CD4-positive, alpha-beta memory T cell (primary cell): ENCODE measurements at regions of chr6 and their contacts with region 1.

Region 1: DNA sequence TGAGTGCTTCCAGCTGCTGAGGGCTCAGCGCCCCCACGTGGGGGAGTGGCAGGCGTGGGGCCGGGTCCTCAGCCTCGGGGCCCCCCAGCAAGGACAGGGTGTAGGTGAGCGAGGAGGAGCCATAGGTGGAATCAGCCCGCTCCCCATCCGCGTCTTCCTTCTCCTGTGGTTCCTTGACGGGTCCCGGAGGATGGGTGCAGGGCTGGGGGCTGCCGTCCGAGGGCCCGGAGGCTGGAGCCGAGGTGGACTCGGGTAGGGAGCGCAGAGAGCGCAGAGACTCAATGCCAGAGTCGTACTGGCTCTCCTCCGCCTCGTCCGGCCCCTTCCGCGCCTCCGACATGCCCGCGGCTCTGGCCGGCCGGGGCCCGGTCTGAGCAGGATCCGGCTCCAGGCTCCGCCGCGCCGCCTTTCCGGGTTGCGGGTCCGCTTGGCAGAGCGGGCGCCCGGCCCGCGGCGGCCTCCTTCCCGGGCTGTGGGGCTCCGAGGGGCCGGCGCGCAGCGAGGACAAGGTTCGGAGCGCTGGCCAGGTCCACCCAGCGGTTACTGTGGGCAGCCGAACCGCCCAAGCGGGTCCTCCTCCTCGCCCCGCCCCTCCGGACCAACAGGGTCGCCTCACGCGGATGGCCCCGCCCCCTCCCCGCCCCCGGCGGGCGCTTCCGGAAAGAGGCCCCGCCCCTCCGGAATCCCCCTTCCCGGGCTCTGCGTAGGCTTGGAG is at the start of gene NFKBIE:
- DNase-seq: peak; percentile 93 to 96 (median 94)
- H3K4me3 ChIP-seq: peak within 1 kb of the TSS; percentile 83 to 89
- H3K4me3 Mint-ChIP-seq: peak within 1 kb of the TSS; percentile 73 to 96 (median 93)
- H3K27ac ChIP-seq: peak within 1 kb of the TSS; percentile 96
- H3K27ac Mint-ChIP-seq: peak within 1 kb of the TSS; percentile 95 to 98 (median 97)
- H3K4me1 ChIP-seq: peaks cover 38% of the 10 kb centered on the region
- H3K4me1 Mint-ChIP-seq: peaks cover 17 to 48% (median 40%) of the 10 kb centered on the region in 4 donors
- H3K27me3 ChIP-seq: peaks cover 12% of the 10 kb centered on the region
- H3K27me3 Mint-ChIP-seq: peaks cover 8 to 18% of the 10 kb centered on the region in 2 donors
- total RNA-seq, gene NFKBIE: 12.7 to 15.0 TPM

Region 2: DNA sequence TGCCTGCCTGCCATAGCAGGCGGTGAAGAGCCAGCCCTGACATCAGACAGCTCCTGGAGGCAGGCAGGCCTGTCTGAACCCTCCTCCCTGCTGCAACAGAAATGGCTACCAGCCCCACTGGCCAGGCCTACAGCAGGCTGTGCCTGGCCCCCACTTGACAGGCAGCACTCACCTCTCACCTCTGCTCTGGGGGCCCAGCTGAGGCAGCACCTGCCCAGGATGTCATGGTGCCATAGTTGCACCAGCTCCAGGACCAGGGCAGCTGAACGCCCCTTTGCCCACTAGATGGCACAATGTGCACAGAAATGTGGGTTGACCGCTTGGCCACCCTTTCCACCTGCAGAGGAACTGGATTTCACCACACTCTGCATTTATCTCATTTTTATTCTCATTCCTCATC is 168.6 kb before region 1 on chr6:
- CTCF ChIA-PET with region 1: interaction called, 3 read pairs
- POLR2A ChIA-PET with region 1: no interaction called
- intact Hi-C with region 1: loop called (anchors 2 kb)
- DNase-seq: peak; percentile 67 to 76 (median 70)
- H3K4me3 ChIP-seq: no peak overlapping the region
- H3K4me3 Mint-ChIP-seq: no peak overlapping the region
- H3K27ac ChIP-seq: no peak overlapping the region
- H3K27ac Mint-ChIP-seq: peak overlapping the region in 3 of 7 donors; percentile 5 to 77 (median 70)
- H3K4me1 ChIP-seq: no peaks in the 10 kb centered on the region
- H3K4me1 Mint-ChIP-seq: peaks cover under 1 to 7% (median 5%) of the 10 kb centered on the region in 4 donors
- H3K27me3 ChIP-seq: no peaks in the 10 kb centered on the region
- H3K27me3 Mint-ChIP-seq: no peaks in the 10 kb centered on the region

Region 3: DNA sequence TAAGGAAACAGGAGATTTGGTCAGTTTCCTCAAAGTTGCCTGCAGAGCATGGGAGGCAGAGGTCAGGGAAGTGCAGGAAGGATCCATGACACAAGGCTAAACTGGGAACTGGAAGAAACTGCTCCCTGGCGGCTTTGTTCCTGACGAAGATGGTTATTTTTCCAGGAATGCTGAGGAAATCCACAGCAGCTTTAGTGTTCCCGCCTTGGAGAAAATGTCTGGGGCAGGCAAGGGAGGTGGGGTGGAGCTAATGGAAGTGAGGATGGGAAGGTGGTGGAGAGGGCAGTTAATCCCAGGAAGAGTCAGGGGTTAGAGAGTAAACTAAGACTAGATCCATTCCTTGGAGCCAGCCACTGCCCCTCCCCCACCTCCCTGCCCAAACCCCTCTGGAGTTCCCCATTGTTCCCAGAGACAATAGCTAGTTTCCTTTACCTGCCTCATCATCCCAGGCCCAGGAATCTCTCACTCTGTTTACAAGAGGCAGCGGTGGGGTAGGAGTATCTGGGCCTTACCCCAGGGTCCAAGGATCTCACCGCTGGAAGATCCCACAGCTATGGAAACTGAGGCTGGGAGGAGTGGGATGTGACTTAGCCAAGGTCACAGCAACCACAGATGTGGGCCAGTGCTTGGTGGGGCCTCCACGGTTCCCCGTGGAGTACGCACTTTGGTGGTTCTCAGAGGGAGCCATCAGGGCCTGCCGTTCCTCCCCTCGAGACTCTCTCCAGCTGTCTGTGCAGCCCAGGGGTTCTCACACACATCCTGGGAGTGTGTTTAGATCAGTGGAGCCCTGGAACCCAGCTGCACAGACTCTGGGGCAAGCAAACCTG is 62.5 kb before region 1 on chr6:
- CTCF ChIA-PET with region 1: no interaction called
- POLR2A ChIA-PET with region 1: no interaction called
- intact Hi-C with region 1: no loop called
- DNase-seq: no peak
- H3K4me3 ChIP-seq: no peak overlapping the region
- H3K4me3 Mint-ChIP-seq: no peak overlapping the region
- H3K27ac ChIP-seq: no peak overlapping the region
- H3K27ac Mint-ChIP-seq: no peak overlapping the region
- H3K4me1 ChIP-seq: no peaks in the 10 kb centered on the region
- H3K4me1 Mint-ChIP-seq: no peaks in the 10 kb centered on the region
- H3K27me3 ChIP-seq: no peaks in the 10 kb centered on the region
- H3K27me3 Mint-ChIP-seq: no peaks in the 10 kb centered on the region

Region 4: DNA sequence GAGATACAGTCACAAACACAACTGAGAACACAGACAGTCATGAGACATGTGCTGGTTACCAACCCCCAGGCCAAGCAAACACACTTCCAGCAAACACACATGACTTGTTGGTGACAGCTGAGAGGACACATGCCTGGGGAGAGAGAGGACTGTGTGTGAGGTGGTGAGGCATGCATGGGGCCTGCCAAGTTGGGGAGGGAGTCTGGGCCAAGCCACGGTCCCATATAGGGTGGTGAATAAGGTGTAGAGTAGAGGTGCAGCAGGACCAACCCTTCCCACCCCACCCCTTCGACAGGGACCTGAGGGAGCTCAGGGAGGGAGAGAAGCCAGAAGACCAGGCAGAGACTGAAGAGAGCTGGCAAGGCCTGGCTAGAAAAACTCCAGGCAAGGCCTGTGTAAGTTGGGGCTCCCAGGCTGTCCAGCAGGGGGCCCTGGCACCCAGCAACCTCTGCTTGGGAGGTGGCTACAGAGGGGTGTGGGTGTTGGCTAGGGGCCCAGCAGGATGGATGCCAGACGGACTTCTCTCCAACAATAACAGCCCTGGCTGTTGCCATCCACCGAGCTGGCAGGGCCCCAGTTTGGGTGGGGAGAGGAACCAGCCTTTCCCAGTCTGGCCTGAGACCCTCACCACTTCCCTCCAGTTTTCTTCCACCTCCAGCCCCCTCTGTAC is 43.7 kb before region 1 on chr6:
- CTCF ChIA-PET with region 1: interaction called, 5 read pairs
- POLR2A ChIA-PET with region 1: no interaction called
- intact Hi-C with region 1: loop called (anchors 1 kb)
- DNase-seq: peak; percentile 72 to 80 (median 74)
- H3K4me3 ChIP-seq: no peak overlapping the region
- H3K4me3 Mint-ChIP-seq: peak overlapping the region in 4 of 8 donors; percentile 15 to 68 (median 29)
- H3K27ac ChIP-seq: no peak overlapping the region
- H3K27ac Mint-ChIP-seq: peak overlapping the region in 4 of 7 donors; percentile 44 to 72 (median 56)
- H3K4me1 ChIP-seq: peaks cover 29% of the 10 kb centered on the region
- H3K4me1 Mint-ChIP-seq: peaks cover 7 to 36% (median 21%) of the 10 kb centered on the region in 4 donors
- H3K27me3 ChIP-seq: no peaks in the 10 kb centered on the region
- H3K27me3 Mint-ChIP-seq: peaks cover 2 to 7% of the 10 kb centered on the region in 2 donors

Region 5: DNA sequence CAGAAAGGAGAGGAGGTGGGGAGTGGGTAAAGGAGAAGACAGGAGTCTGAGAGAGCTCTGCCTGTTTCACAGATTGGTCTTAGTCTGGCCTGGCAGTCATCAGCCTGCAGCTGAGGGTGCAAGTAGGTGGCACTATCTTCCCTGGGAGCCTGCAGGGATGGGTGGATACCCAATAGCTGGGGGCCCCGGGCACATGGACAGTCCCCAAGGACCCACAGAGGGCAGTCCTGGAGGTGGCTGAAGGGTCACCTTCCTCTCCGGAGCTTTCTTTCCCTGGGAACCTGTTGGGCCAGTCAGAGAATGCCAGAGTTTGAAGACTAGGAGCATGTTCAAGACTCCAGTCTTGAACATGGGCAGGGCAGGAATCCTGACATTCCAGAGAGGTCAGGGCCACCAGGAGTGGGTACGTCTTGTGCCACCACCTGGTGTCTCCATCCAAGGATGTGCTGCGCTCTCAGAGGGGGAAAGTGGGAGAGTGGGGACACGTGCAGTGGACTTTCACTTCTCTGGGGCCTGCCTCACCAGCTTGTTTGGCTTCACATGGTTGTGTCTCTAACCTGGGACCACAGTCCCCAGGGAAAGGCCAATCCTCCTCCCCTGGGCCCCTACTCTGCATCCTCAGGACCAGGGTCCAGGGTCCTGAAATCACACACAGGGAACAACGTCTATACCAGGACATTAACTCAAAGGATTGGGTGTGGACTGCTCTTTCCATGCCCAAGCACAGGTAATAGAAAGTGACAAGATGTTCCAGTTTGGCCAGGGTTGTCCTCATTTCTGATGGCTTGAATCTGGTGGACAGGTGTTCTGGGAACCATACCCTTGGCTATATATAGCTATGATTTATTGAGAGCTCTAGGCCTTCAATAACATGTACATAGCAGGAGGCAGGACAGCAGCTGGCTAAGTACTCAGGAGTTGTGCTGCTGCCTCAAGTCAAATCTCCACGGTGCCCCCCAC is 29.9 kb after region 1 on chr6:
- CTCF ChIA-PET with region 1: interaction called, 16 read pairs
- POLR2A ChIA-PET with region 1: no interaction called
- intact Hi-C with region 1: no loop called
- DNase-seq: no peak
- H3K4me3 ChIP-seq: no peak overlapping the region
- H3K4me3 Mint-ChIP-seq: peak overlapping the region in 1 of 8 donors; percentile 50
- H3K27ac ChIP-seq: no peak overlapping the region
- H3K27ac Mint-ChIP-seq: no peak overlapping the region
- H3K4me1 ChIP-seq: peaks cover 18% of the 10 kb centered on the region
- H3K4me1 Mint-ChIP-seq: peaks cover 0 to 23% (median 5%) of the 10 kb centered on the region in 4 donors
- H3K27me3 ChIP-seq: peaks cover 26% of the 10 kb centered on the region
- H3K27me3 Mint-ChIP-seq: peaks cover 48 to 49% of the 10 kb centered on the region in 2 donors

Region 6: DNA sequence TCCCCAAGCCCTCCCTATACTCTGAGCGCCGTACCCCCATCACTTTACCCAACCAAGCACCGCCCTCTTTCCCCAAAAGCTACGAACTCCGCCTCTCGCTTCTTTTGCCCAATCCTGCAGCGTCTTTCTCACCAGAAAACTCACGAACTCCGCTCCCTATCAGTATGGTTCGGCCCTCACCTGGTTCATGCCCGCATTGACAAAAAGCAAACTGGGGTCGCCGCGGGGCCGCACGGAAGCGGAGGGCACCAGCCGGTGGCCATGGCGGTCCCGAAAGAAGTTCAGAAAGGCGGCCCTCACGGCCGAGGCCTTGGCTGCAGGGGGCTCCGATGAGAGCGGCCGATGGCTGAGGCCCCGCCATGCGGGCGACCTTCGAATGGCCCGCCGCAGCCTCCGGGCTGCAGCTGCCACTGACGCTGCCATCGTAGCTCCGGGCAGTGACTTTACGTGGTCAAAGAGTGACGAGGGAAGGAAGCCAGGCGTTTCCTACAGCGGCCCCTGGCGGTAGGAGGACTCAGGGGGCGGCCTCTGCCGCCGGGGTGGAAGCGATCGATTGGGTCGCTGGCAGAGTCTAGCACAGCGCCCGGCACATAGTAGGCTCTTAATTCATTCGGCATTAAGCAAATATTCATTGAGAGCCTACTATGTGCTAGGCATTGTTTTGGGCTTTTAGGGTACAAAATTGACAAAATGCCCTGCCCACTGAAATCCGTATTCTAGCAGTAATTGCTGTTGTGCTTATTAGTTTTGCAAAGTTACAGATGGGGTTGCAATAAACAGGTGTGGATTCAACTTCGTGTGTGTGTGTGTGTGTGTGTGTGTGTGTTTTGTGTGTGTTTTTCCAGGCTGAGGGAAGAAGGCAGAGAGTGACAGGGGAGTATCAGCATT is 48.0 kb after region 1 on chr6 and contains the start of gene AARS2:
- CTCF ChIA-PET with region 1: interaction called, 63 read pairs
- POLR2A ChIA-PET with region 1: interaction called, 6 read pairs
- intact Hi-C with region 1: loop called (anchors 1 kb)
- DNase-seq: peak; percentile 86 to 90 (median 87)
- H3K4me3 ChIP-seq: peak within 1 kb of the TSS; percentile 61 to 91
- H3K4me3 Mint-ChIP-seq: peak within 1 kb of the TSS; percentile 90 to 98 (median 96)
- H3K27ac ChIP-seq: peak within 1 kb of the TSS; percentile 79
- H3K27ac Mint-ChIP-seq: peak within 1 kb of the TSS; percentile 82 to 96 (median 95)
- H3K4me1 ChIP-seq: peaks cover 11% of the 10 kb centered on the region
- H3K4me1 Mint-ChIP-seq: peaks cover 5 to 30% (median 20%) of the 10 kb centered on the region in 4 donors
- H3K27me3 ChIP-seq: no peaks in the 10 kb centered on the region
- H3K27me3 Mint-ChIP-seq: peaks cover 0 to 6% of the 10 kb centered on the region in 2 donors
- total RNA-seq, gene AARS2: 23.7 to 25.6 TPM

Region 7: GRCh38 chr6:44356487-44356886 is 91.3 kb after region 1 on chr6:
- CTCF ChIA-PET with region 1: no interaction called
- POLR2A ChIA-PET with region 1: no interaction called
- intact Hi-C with region 1: no loop called
- DNase-seq: no peak
- H3K4me3 ChIP-seq: no peak overlapping the region
- H3K4me3 Mint-ChIP-seq: no peak overlapping the region
- H3K27ac ChIP-seq: no peak overlapping the region
- H3K27ac Mint-ChIP-seq: no peak overlapping the region
- H3K4me1 ChIP-seq: no peaks in the 10 kb centered on the region
- H3K4me1 Mint-ChIP-seq: no peaks in the 10 kb centered on the region
- H3K27me3 ChIP-seq: no peaks in the 10 kb centered on the region
- H3K27me3 Mint-ChIP-seq: peaks cover 0 to 12% of the 10 kb centered on the region in 2 donors

Region 8: GRCh38 chr6:44387346-44388133 is 122.4 kb after region 1 on chr6 and contains the start of gene CDC5L:
- CTCF ChIA-PET with region 1: interaction called, 3 read pairs
- POLR2A ChIA-PET with region 1: no interaction called
- intact Hi-C with region 1: loop called (anchors 2 kb)
- DNase-seq: peak; percentile 95 to 97 (median 96)
- H3K4me3 ChIP-seq: peak within 1 kb of the TSS; percentile 91 to 93
- H3K4me3 Mint-ChIP-seq: peak within 1 kb of the TSS; percentile 93 to 99 (median 97)
- H3K27ac ChIP-seq: peak within 1 kb of the TSS; percentile 89
- H3K27ac Mint-ChIP-seq: peak within 1 kb of the TSS; percentile 95 to 99 (median 98)
- H3K4me1 ChIP-seq: peaks cover 30% of the 10 kb centered on the region
- H3K4me1 Mint-ChIP-seq: peaks cover 31 to 43% (median 38%) of the 10 kb centered on the region in 4 donors
- H3K27me3 ChIP-seq: no peaks in the 10 kb centered on the region
- H3K27me3 Mint-ChIP-seq: no peaks in the 10 kb centered on the region
- total RNA-seq, gene CDC5L: 20.9 to 22.4 TPM

Region 9: DNA sequence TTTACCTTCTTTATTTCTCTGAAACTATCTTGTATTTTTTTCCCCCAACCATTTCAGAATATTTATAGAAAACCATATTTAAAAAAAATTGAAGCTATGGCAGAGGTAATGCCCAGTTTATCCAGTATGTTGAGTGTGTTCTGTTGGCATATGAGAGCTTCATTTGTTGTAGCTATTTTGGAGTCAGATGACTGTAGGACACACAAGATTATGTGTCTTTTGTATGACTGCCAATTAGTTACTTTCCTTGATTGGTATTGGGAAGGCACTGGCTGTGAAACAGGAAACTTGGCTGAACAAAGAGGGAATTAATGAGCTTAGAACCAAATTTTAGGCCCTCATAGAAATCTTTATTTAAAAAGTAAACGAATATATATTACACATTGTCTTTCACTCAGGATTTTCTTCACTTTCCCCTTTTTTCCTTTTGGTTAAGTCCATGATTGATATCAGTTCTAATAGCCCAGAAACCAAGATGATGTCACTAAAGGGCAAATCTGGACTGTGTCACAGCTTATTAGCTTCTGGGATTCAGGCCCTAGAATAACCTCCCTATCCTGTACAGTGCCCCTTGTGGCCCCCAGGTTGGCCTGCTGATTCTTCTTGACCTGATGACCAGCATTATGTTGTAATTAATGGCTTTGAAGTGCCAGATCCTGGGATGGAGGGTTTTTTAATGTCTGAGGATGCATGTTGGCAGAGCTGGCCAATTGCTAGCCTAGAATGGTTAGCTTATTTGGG is 132.4 kb after region 1 on chr6:
- CTCF ChIA-PET with region 1: no interaction called
- POLR2A ChIA-PET with region 1: no interaction called
- intact Hi-C with region 1: no loop called
- DNase-seq: no peak
- H3K4me3 ChIP-seq: no peak overlapping the region
- H3K4me3 Mint-ChIP-seq: peak overlapping the region in 1 of 8 donors; percentile 52
- H3K27ac ChIP-seq: no peak overlapping the region
- H3K27ac Mint-ChIP-seq: peak overlapping the region in 1 of 7 donors; percentile 48
- H3K4me1 ChIP-seq: peaks cover 9% of the 10 kb centered on the region
- H3K4me1 Mint-ChIP-seq: peaks cover 20 to 42% (median 35%) of the 10 kb centered on the region in 4 donors
- H3K27me3 ChIP-seq: no peaks in the 10 kb centered on the region
- H3K27me3 Mint-ChIP-seq: no peaks in the 10 kb centered on the region